ENCODE measurements at regions of chr12 and their contacts with region 1.

Region 1: GRCh38 chr12:77925536-77926108 is 94.9 kb downstream of the NAV3 start:
- DNase-seq: peak; percentile 92
- H3K4me3 ChIP-seq: no peak overlapping the region
- H3K27ac ChIP-seq: no peak overlapping the region
- H3K4me1 ChIP-seq: no peaks in the 10 kb centered on the region
- H3K27me3 ChIP-seq: no peaks in the 10 kb centered on the region
- CTCF ChIP-seq: peak; percentile 91 to 99
- POLR2A ChIP-seq: no peak

Region 2: GRCh38 chr12:77152623-77153193 is 772.9 kb before region 1 on chr12:
- CTCF ChIA-PET with region 1: interaction called, 17 read pairs
- POLR2A ChIA-PET with region 1: no interaction called
- dilution Hi-C with region 1: no loop called
- intact Hi-C with region 1: loop called (anchors 1 kb)
- DNase-seq: peak; percentile 68
- H3K4me3 ChIP-seq: no peak overlapping the region
- H3K27ac ChIP-seq: no peak overlapping the region
- H3K4me1 ChIP-seq: no peaks in the 10 kb centered on the region
- H3K27me3 ChIP-seq: no peaks in the 10 kb centered on the region
- CTCF ChIP-seq: peak; percentile 32 to 48
- POLR2A ChIP-seq: no peak

Region 3: DNA sequence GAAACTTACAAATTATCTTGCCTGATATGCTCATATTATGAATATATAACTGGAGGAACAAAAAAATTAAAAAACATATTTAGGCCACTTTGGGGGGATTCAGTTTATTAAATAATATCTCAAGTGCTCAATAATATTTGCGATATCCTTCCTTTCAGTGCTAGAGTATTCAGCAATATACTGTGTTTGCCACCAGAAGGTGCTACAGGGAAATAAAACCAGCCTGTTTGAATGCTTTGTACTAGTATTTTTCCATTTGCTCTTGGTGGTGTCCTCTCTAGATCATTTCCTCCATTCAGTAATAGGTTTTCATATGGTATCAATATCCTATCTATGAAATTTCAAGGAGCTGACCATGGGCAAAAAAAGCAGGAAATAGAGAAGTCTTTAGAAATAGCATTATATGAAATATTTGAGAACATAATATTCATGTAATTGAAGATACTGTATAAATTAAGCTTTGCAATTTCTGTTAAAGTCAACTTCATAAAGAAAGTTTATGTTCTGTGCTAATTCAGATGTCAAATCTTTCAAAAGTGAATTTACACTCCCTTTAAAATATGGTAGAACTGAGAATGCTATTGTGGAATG is 201.2 kb before region 1 on chr12:
- CTCF ChIA-PET with region 1: interaction called, 305 read pairs
- POLR2A ChIA-PET with region 1: no interaction called
- dilution Hi-C with region 1: no loop called
- intact Hi-C with region 1: loop called (anchors 1 kb)
- DNase-seq: peak; percentile 61
- H3K4me3 ChIP-seq: no peak overlapping the region
- H3K27ac ChIP-seq: no peak overlapping the region
- H3K4me1 ChIP-seq: no peaks in the 10 kb centered on the region
- H3K27me3 ChIP-seq: no peaks in the 10 kb centered on the region
- CTCF ChIP-seq: peak; percentile 49 to 56
- POLR2A ChIP-seq: no peak

Region 4: DNA sequence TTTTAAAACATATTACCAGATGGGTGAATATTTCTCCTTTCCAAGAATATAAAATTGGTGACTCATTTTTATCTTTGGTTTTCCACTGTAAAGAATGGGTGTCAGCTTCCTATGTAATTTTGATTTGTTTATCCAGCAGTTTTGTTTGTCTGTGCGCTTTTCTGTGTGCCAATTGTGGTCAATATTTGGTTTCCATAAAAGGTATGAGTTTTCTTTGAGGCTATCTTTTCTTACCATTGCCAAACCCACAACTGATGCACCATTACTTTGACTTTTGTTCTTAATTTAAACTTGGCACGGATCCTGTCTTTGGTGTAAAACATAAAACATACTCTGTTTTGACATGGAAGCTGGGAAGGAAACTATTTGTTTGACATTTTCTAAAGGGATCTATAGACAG is 173.7 kb before region 1 on chr12:
- CTCF ChIA-PET with region 1: interaction called, 23 read pairs
- POLR2A ChIA-PET with region 1: no interaction called
- dilution Hi-C with region 1: no loop called
- intact Hi-C with region 1: loop called (anchors 1 kb)
- DNase-seq: peak; percentile 82
- H3K4me3 ChIP-seq: peak overlapping the region in 1 of 3 experiments; percentile 8
- H3K27ac ChIP-seq: peak overlapping the region; percentile 37
- H3K4me1 ChIP-seq: peaks cover 15% of the 10 kb centered on the region
- H3K27me3 ChIP-seq: no peaks in the 10 kb centered on the region
- CTCF ChIP-seq: no peak
- POLR2A ChIP-seq: no peak

Region 5: GRCh38 chr12:77847060-77847541 is 78.5 kb before region 1 on chr12:
- CTCF ChIA-PET with region 1: interaction called, 14 read pairs
- POLR2A ChIA-PET with region 1: no interaction called
- dilution Hi-C with region 1: no loop called
- intact Hi-C with region 1: loop called (anchors 1 kb)
- DNase-seq: peak; percentile 40
- H3K4me3 ChIP-seq: no peak overlapping the region
- H3K27ac ChIP-seq: peak overlapping the region; percentile 78
- H3K4me1 ChIP-seq: peaks cover 44% of the 10 kb centered on the region
- H3K27me3 ChIP-seq: no peaks in the 10 kb centered on the region
- CTCF ChIP-seq: no peak
- POLR2A ChIP-seq: no peak

Region 6: DNA sequence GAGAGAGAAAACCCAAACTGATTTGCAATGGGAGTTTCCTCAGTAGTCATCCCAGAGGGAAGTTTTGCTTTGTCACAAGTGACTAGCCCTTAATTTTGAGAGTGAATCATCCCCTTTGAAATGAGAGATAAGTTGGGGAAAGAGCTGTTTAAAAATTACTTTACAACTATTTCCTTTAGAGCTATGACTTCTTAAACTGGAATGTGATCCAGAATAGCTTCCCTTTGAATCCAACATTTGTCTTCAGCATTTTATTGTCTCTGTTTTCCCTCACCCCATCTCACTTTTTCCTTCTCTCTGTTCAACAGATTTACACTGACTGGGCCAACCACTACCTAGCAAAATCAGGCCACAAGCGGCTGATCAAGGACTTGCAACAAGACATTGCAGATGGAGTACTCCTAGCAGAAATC is 14.4 kb after region 1 on chr12:
- CTCF ChIA-PET with region 1: interaction called, 17 read pairs
- POLR2A ChIA-PET with region 1: no interaction called
- dilution Hi-C with region 1: no loop called
- intact Hi-C with region 1: no loop called
- DNase-seq: peak; percentile 84
- H3K4me3 ChIP-seq: peak overlapping the region in 2 of 3 experiments; percentile 70 to 90
- H3K27ac ChIP-seq: peak overlapping the region; percentile 95
- H3K4me1 ChIP-seq: peaks cover 39% of the 10 kb centered on the region
- H3K27me3 ChIP-seq: no peaks in the 10 kb centered on the region
- CTCF ChIP-seq: no peak
- POLR2A ChIP-seq: peak; percentile 57

Region 7: DNA sequence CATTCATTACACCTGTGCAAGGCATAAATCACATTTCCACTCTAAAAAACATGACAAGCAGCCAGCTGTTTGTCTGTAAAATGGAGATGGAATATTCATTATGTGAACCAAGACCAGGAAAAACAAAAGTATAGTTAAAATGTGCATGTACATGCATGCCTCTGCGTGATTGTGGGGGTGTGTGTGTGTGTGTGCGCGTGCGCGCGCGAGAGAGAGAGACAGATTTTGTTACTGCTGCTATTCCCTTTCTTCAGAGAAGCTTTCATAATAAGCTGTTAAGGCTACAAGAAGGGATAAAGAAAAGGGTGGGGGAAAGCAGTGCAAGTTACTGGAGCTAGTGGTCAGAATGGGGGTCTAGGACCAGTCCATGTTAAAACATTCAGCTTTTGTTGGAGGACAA is 335.4 kb after region 1 on chr12:
- CTCF ChIA-PET with region 1: no interaction called
- POLR2A ChIA-PET with region 1: no interaction called
- dilution Hi-C with region 1: no loop called
- intact Hi-C with region 1: no loop called
- DNase-seq: no peak
- H3K4me3 ChIP-seq: no peak overlapping the region
- H3K27ac ChIP-seq: no peak overlapping the region
- H3K4me1 ChIP-seq: no peaks in the 10 kb centered on the region
- H3K27me3 ChIP-seq: peaks cover 2 to 7% of the 10 kb centered on the region in 2 experiments
- CTCF ChIP-seq: no peak
- POLR2A ChIP-seq: no peak

Measured in endothelial cell of umbilical vein (primary cell).